ENCODE measurements at regions of chr12 and their contacts with region 1.

Region 1: GRCh38 chr12:77725611-77726010 is 105.1 kb upstream of the NAV3 start:
- DNase-seq: no peak
- H3K4me3 ChIP-seq: no peak overlapping the region
- H3K27ac ChIP-seq: no peak overlapping the region
- H3K4me1 ChIP-seq: no peaks in the 10 kb centered on the region
- H3K27me3 ChIP-seq: no peaks in the 10 kb centered on the region
- CTCF ChIP-seq: no peak
- EP300 ChIP-seq: no peak
- POLR2A ChIP-seq: no peak

Region 2: DNA sequence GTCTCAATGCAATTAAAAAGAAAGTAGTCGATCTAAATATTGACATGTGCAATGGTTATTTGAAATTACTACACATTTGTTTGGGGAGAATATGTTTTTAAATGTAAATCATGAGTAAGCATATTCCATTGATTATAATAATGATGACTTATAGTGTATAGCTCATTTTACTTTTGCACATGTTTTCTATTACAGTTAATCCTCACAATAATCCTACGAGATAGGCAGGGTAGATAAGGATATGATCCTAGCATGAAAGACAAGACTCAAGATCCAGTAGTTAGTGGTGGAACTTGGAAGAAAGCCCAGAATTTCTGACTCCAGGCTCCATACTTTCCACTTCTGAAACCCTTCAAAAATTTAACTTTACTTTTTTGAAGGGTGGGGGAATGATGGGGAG is 199.1 kb after region 1 on chr12:
- intact Hi-C with region 1: loop called (anchors 5 kb)
- DNase-seq: peak in 1 of 2 donors; percentile 17
- H3K4me3 ChIP-seq: no peak overlapping the region
- H3K27ac ChIP-seq: no peak overlapping the region
- H3K4me1 ChIP-seq: peaks cover 0 to 6% (median 0%) of the 10 kb centered on the region in 4 donors
- H3K27me3 ChIP-seq: no peaks in the 10 kb centered on the region
- CTCF ChIP-seq: no peak
- EP300 ChIP-seq: no peak
- POLR2A ChIP-seq: no peak

Region 3: GRCh38 chr12:78050790-78051189 is 325.2 kb after region 1 on chr12:
- intact Hi-C with region 1: no loop called
- DNase-seq: no peak
- H3K4me3 ChIP-seq: no peak overlapping the region
- H3K27ac ChIP-seq: no peak overlapping the region
- H3K4me1 ChIP-seq: no peaks in the 10 kb centered on the region
- H3K27me3 ChIP-seq: no peaks in the 10 kb centered on the region
- CTCF ChIP-seq: no peak
- EP300 ChIP-seq: no peak
- POLR2A ChIP-seq: no peak